ENCODE measurements at regions of chr3 and their contacts with region 1.

Region 1: DNA sequence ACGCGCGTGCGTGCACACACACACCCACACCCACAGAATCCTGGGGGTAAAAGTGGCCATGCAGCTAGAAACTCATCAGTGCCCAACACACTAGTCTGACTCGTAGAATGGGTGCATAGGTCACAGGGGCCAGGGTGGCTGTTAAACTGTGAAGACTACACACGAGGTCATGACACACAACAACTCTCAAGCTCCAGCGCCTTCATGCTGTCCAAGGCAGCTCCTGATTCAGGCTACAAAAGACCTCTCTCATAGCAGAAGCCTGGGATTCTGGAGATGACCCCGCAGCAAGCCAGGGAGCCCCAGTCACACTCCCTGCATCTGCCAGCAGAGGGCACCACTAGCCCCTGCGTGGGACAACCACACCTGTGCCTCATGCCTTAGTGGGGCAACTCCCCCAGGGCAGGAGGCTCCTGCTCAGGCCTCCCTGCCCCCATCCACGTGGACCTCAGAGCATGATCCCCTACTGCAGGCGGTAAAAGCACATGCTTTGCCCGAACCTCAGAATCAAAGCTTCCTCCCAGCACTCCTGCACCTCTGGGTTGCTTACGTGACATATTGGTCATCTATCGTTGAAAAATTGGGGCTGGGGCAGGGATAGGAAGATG is 93.1 kb downstream of the LRIG1 start:
- DNase-seq: peak; percentile 78
- H3K4me3 ChIP-seq: no peak overlapping the region
- H3K27ac ChIP-seq: no peak overlapping the region
- H3K4me1 ChIP-seq: peaks cover 34% of the 10 kb centered on the region
- CTCF ChIP-seq: peak; percentile 91

Region 2: DNA sequence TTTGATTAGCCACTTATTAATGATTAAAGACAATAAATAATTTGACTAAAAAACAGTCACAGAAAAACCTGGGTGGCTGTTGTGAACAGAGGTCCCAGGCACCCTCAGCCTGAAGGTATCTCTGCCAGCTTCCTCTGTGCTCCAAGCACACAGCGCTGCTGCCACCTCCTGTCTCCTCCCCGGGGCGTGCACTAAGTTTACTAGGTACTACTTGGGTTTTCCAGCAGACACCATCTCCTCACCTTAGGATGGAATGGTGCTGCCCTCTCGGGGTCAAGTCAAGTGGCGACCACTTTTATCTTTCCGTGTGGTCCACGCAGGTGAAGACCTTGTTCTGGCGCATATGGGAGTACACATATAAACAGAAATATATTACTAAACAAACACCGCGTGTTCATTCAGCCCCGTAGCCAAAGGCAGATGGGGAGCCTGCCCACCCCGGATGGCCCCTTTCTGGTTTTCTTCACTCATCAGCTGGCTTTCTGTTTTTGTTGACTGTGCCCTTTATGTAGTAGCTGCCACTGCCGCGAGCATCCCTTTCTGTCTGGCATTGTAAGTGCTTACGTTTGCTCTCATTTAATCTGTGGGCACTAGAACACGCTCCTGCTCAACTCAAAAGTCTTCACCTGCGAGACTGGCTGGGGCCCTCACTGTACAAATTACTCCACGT is 34.9 kb before region 1 on chr3:
- CTCF ChIA-PET with region 1: no interaction called
- POLR2A ChIA-PET with region 1: no interaction called
- intact Hi-C with region 1: no loop called
- DNase-seq: peak; percentile 26
- H3K4me3 ChIP-seq: no peak overlapping the region
- H3K27ac ChIP-seq: no peak overlapping the region
- H3K4me1 ChIP-seq: peaks cover 24% of the 10 kb centered on the region
- CTCF ChIP-seq: peak; percentile 38

Region 3: DNA sequence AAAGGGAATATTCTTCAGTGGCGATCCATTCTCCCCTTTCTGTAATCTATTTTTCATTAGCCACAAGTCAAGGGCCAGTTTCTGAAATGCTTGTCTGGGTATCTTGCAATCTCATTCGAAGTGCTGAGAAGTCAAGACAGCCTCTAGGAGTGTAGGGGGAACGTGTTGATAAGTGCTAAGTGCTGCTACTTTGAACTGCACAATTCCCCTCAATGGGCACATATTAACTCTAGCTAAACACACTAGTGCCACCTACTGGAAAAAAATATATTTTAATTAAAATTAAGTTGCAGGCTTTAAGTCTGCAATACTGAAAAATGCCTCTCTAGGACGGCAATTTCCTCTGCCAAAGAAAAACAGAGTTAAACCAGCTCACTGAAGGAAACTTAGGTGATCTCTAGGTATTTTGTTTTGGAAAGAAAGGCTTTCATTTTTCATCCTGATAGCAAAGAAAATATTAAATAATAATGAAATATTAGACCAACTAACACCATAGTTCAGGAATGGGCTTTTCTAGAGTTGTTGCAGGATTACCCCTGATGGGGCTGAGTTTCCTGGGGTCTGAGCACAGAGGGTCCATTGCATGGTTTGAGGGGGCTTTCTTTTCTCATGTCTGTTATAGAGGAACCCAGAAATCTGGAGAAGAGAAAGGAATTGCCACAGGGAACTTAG is 408.5 kb after region 1 on chr3:
- CTCF ChIA-PET with region 1: no interaction called
- POLR2A ChIA-PET with region 1: interaction called, 3 read pairs
- intact Hi-C with region 1: loop called (anchors 1 kb)
- DNase-seq: peak; percentile 81
- H3K4me3 ChIP-seq: no peak overlapping the region
- H3K27ac ChIP-seq: no peak overlapping the region
- H3K4me1 ChIP-seq: no peaks in the 10 kb centered on the region
- CTCF ChIP-seq: peak; percentile 82